HepG2 (cell line): ENCODE measurements at regions of chr6 and their contacts with region 1.

Region 1: DNA sequence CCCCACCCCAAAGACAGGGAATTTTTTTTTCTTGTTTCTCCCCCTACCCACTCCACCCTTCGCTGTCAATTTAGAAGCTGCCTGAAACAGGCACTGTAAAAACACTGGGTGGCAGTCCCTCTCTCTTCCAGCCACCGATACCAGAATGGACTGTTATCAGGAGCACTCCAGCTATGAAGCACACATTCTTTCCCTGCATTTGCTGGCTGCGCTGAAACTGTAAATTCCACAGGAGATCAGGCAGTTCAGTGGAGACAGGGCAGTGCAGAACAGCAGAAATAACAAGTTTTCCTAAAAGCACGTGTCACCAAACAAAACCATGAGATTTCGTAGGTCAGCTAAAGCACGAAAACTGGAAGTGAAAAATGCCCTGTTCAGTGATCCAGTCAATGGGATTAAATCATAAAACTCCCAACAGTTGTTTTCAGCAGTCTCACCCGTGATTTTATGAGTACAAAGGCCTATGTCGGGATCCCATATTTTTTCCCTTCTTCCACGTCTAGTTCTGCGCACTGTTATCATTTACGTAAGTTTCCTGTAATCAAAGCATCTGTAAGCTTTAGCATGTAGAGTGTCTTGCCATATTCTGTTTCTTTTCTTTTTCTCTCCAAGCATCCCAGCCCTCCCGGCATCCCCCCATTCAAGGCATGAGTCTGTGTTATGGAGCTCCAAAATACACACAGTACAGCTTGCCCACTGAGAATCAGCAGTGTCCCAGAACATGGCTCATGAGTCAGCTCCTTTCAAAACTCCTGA is 359.9 kb upstream of the EPHA7 start:
- DNase-seq: no peak
- ATAC-seq: peak; percentile 35; the same call in 1 of the 3 replicates
- H3K4me3 ChIP-seq: no peak overlapping the region
- H3K27ac ChIP-seq: no peak overlapping the region
- H3K4me1 ChIP-seq: no peaks in the 10 kb centered on the region
- H3K27me3 ChIP-seq: no peaks in the 10 kb centered on the region
- CTCF ChIP-seq: no peak
- EP300 ChIP-seq: no peak
- POLR2A ChIP-seq: no peak
- RAD21 ChIP-seq: no peak

Region 2: GRCh38 chr6:92710048-92710447 is 1069.2 kb before region 1 on chr6:
- CTCF ChIA-PET with region 1: no interaction called
- POLR2A ChIA-PET with region 1: no interaction called
- in situ Hi-C with region 1: no loop called
- intact Hi-C with region 1: loop called (anchors 5 kb)
- DNase-seq: no peak
- ATAC-seq: no peak
- H3K4me3 ChIP-seq: no peak overlapping the region
- H3K27ac ChIP-seq: no peak overlapping the region
- H3K4me1 ChIP-seq: no peaks in the 10 kb centered on the region
- H3K27me3 ChIP-seq: no peaks in the 10 kb centered on the region
- CTCF ChIP-seq: no peak
- EP300 ChIP-seq: no peak
- POLR2A ChIP-seq: no peak
- RAD21 ChIP-seq: no peak